ENCODE measurements at regions of chr11 and their contacts with region 1.

Region 1: DNA sequence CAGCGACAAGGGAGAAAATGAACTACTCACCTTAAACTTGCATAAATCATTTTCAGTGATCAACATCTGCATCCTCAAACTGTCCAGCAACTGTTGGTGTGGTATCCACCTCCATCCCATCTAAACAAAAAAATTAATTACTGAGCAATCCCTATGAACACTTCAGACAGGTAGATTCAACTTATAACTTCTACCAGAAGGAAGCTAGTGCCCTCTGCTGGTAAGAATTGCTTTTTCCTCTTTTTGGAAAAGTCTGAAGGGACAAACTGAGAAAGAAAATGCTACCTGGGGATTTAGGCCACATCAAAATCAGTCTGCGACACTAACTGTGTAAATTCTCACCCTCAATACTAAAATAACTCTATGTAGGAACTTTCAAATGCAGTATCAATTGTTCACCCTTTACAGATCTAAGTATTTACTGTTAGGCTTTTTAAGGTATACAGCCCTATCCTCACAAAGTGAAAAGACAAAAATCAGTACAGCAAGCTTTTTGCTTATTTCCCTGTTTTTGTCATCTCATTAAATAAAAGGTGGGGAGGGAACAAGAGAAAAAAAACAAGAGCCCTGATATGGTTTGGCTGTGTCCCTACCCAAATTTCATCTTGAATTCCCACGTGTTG is 17.9 kb downstream of the CLNS1A start:
- DNase-seq: peak; percentile 92
- ATAC-seq: peak; percentile 57
- H3K4me3 ChIP-seq: no peak overlapping the region
- H3K27ac ChIP-seq: no peak overlapping the region
- H3K4me1 ChIP-seq: no peaks in the 10 kb centered on the region
- H3K27me3 ChIP-seq: no peaks in the 10 kb centered on the region
- CTCF ChIP-seq: peak; percentile 93

Region 2: DNA sequence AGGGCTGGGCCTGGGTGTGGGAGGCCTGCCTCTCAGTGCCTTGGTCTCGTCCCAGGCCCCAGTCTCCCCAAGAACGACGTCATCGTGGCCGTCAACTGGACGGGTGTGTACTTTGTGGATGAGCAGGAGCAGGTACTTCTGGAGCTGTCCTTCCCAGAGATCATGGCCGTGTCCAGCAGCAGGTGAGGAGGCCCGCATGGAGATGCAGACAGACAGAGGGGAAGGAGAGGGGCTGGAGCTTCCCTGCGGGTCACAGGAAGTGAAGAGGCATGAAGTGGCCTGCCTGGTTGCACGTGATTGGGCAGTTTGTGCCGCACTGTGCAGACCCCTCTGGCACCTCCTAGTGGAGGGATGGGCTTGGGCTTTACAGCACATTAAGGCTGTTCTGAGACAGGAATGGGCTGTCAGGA is 421.2 kb before region 1 on chr11:
- CTCF ChIA-PET with region 1: interaction called, 4 read pairs
- POLR2A ChIA-PET with region 1: no interaction called
- intact Hi-C with region 1: loop called (anchors 2 kb)
- DNase-seq: peak; percentile 43
- ATAC-seq: peak; percentile 30; the same call in 1 of the 2 replicates
- H3K4me3 ChIP-seq: no peak overlapping the region
- H3K27ac ChIP-seq: no peak overlapping the region
- H3K4me1 ChIP-seq: no peaks in the 10 kb centered on the region
- H3K27me3 ChIP-seq: no peaks in the 10 kb centered on the region
- CTCF ChIP-seq: peak; percentile 64

Region 3: DNA sequence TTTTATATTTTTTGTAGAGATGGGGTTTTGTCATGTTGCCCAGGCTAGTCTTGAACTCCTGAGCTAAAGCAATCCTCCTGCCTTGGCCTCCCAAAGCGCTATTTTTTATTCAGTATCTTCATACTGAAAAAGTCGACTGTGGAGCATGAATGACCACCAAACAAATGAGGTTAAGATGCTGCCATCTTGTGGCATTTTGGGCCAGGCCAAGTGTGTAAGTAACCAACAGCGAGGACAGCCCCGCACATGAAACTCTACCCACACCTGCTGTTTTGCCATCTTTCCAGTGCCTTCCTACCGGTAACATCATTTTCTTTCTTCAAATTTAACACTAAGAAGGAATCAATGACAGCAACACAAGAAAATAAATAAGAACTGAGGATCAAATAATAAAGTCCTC is 62.1 kb before region 1 on chr11:
- CTCF ChIA-PET with region 1: no interaction called
- POLR2A ChIA-PET with region 1: no interaction called
- intact Hi-C with region 1: loop called (anchors 2 kb)
- DNase-seq: peak; percentile 57
- ATAC-seq: peak; percentile 70
- H3K4me3 ChIP-seq: no peak overlapping the region
- H3K27ac ChIP-seq: no peak overlapping the region
- H3K4me1 ChIP-seq: peaks cover 13% of the 10 kb centered on the region
- H3K27me3 ChIP-seq: no peaks in the 10 kb centered on the region
- CTCF ChIP-seq: peak; percentile 64

Region 4: GRCh38 chr11:77647654-77648305 is 28.1 kb after region 1 on chr11:
- CTCF ChIA-PET with region 1: no interaction called
- POLR2A ChIA-PET with region 1: no interaction called
- intact Hi-C with region 1: no loop called
- DNase-seq: no peak
- ATAC-seq: peak; percentile 30
- H3K4me3 ChIP-seq: no peak overlapping the region
- H3K27ac ChIP-seq: no peak overlapping the region
- H3K4me1 ChIP-seq: peaks cover 13% of the 10 kb centered on the region
- H3K27me3 ChIP-seq: no peaks in the 10 kb centered on the region
- CTCF ChIP-seq: no peak

Region 5: DNA sequence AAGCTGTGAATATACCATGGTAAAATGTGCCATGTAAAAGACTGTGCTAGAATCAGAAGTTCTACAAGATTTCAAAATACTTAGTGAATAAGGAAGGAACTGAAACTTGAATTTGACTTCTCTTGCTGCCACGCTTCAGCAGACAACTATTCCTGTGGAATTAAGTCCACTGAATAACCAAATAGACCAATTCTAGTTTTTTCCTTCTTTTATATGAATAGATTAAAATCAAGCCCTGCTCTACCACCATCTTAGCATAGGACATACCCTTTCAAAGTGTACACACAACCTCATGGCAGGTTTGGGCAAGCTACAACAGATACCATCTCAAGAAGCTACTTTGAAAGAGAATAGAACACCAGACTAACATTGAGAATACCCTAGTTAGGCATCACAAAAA is 41.3 kb after region 1 on chr11:
- CTCF ChIA-PET with region 1: no interaction called
- POLR2A ChIA-PET with region 1: no interaction called
- intact Hi-C with region 1: no loop called
- DNase-seq: no peak
- ATAC-seq: no peak
- H3K4me3 ChIP-seq: no peak overlapping the region
- H3K27ac ChIP-seq: no peak overlapping the region
- H3K4me1 ChIP-seq: no peaks in the 10 kb centered on the region
- H3K27me3 ChIP-seq: no peaks in the 10 kb centered on the region
- CTCF ChIP-seq: no peak